ENCODE measurements at regions of chr12 and their contacts with region 1.

Region 1: DNA sequence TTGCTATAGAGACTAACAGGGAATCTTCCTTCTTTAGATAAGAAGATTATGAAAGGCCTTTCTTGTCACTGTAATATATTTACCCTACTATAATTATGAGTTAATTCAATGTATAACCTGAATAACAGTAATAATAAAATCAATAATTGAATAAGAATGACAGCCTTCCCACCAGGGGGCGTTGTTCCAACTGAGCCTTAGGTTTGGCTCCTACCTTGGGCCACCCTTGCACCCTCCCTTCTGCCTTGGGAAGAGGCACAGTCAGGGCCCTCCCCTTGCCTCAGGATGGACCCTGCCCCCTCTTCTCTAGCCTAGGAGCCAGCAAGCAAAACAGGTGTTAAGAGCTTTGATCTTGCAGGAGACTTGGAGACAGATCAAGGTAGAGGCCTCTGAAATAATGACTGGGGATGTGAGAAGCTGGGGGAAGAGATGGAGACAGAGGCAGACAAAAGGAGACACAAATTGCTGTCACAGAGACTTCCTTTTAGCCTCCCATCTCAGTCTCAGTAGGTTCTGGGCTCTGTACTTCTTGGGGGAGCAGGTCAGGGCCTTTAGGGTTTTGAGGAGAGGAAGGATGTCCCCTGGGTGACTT is 40.1 kb upstream of the CISTR start:
- DNase-seq: no peak
- ATAC-seq: no peak
- H3K4me3 Mint-ChIP-seq: no peak overlapping the region
- H3K27ac Mint-ChIP-seq: no peak overlapping the region
- H3K4me1 Mint-ChIP-seq: no peaks in the 10 kb centered on the region
- H3K27me3 Mint-ChIP-seq: peaks cover 2% of the 10 kb centered on the region
- CTCF ChIP-seq: no peak

Region 2: DNA sequence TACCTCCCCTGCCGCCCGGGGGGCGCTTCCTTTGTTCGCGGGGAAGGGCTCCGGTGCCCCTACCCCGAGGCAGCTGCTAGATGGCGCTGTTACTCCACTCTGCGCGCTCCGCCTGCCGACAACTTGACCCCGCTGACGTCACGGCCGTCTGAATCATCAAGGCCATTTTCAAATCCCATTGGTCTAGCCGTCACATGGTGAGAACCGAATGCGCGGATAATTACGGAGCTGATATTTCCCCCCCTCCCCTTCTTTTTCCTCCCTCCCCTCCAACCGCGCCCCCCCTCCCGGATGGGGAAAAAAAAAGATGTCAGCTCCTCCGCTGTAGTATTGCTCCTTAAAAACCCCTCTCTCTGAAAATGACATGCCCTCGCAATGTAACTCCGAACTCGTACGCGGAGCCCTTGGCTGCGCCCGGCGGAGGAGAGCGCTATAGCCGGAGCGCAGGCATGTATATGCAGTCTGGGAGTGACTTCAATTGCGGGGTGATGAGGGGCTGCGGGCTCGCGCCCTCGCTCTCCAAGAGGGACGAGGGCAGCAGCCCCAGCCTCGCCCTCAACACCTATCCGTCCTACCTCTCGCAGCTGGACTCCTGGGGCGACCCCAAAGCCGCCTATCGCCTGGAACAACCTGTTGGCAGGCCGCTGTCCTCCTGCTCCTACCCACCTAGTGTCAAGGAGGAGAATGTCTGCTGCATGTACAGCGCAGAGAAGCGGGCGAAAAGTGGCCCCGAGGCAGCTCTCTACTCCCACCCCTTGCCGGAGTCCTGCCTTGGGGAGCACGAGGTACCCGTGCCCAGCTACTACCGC is 193.3 kb after region 1 on chr12 and contains the start of gene HOXC10:
- CTCF ChIA-PET with region 1: no interaction called
- POLR2A ChIA-PET with region 1: no interaction called
- intact Hi-C with region 1: loop called (anchors 5 kb)
- DNase-seq: no peak
- ATAC-seq: peak; percentile 37
- H3K4me3 Mint-ChIP-seq: peak within 1 kb of the TSS; percentile 15
- H3K27ac Mint-ChIP-seq: peak within 1 kb of the TSS; percentile 56
- H3K4me1 Mint-ChIP-seq: peaks cover 28% of the 10 kb centered on the region
- H3K27me3 Mint-ChIP-seq: peaks cover 88% of the 10 kb centered on the region
- CTCF ChIP-seq: no peak
- total RNA-seq, gene HOXC10: not detected in 2 replicates

Region 3: DNA sequence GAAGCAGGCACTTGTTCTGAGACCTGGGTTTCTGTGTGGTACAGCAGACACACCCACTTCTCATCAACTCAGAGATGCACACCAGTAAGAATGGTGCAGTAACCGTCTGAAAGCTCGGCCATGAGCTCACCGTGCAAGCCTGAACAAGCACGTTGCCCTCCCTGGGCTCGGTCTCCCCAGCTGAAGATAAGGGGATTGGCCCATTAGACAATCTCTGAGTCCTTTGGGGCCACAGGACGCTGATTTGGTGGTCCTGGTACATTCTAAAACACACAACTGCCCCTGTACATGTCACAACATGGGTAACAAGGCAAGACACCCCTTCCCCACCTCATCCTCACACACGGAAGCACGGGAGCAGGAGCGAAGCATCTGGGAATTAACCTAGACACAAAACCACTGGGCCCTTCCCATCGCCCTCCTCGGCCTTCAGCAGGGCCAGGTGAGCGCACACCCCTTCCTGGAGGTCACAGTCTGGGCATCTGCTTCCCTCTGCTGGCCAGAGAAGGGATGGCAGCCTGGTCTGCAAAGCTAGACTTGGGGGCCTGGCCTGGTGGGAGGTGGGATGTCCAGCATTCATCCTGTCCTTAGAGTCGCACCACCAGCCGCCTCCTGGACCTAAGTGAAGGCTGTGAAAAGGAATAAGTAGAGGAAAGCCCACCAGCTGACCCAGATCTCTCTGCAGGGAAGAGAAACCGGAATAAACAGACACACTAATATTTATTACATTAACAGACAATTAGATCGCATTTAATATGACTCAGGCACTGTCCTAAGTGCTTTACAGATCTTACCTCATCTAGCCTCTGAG is 415.9 kb after region 1 on chr12:
- CTCF ChIA-PET with region 1: interaction called, 3 read pairs
- POLR2A ChIA-PET with region 1: no interaction called
- intact Hi-C with region 1: loop called (anchors 1 kb)
- DNase-seq: peak; percentile 79
- ATAC-seq: peak; percentile 100
- H3K4me3 Mint-ChIP-seq: no peak overlapping the region
- H3K27ac Mint-ChIP-seq: peak overlapping the region; percentile 30
- H3K4me1 Mint-ChIP-seq: peaks cover 4% of the 10 kb centered on the region
- H3K27me3 Mint-ChIP-seq: peaks cover 35% of the 10 kb centered on the region
- CTCF ChIP-seq: no peak